RWPE1 (cell line): ENCODE measurements at regions of chr9 and their contacts with region 1.

Region 1: GRCh38 chr9:75027187-75028107 is 646 bp downstream of the CARNMT1 start:
- DNase-seq: peak; percentile 60
- H3K27ac ChIP-seq: peak overlapping the region; percentile 93
- CTCF ChIP-seq: no peak

Region 2: GRCh38 chr9:75088260-75088905 is 60.9 kb after region 1 on chr9 and contains the start of gene OSTF1:
- CTCF ChIA-PET with region 1: no interaction called
- POLR2A ChIA-PET with region 1: interaction called, 12 read pairs
- DNase-seq: peak; percentile 91
- H3K27ac ChIP-seq: peak within 1 kb of the TSS; percentile 95
- CTCF ChIP-seq: no peak